PC-9 (cell line): ENCODE measurements at regions of chr1 and their contacts with region 1.

Region 1: GRCh38 chr1:37704966-37705365 is 12.7 kb downstream of the CDCA8 start:
- DNase-seq: no peak
- H3K4me3 ChIP-seq: no peak overlapping the region
- H3K27ac ChIP-seq: no peak overlapping the region
- H3K4me1 ChIP-seq: no peaks in the 10 kb centered on the region
- H3K27me3 ChIP-seq: no peaks in the 10 kb centered on the region
- CTCF ChIP-seq: no peak

Region 2: GRCh38 chr1:37498872-37499617 is 205.9 kb before region 1 on chr1:
- CTCF ChIA-PET with region 1: no interaction called
- POLR2A ChIA-PET with region 1: interaction called, 13 read pairs
- intact Hi-C with region 1: no loop called
- DNase-seq: peak; percentile 50 to 78
- H3K4me3 ChIP-seq: no peak overlapping the region
- H3K27ac ChIP-seq: no peak overlapping the region
- H3K4me1 ChIP-seq: peaks cover 31% of the 10 kb centered on the region
- H3K27me3 ChIP-seq: no peaks in the 10 kb centered on the region
- CTCF ChIP-seq: no peak

Region 3: DNA sequence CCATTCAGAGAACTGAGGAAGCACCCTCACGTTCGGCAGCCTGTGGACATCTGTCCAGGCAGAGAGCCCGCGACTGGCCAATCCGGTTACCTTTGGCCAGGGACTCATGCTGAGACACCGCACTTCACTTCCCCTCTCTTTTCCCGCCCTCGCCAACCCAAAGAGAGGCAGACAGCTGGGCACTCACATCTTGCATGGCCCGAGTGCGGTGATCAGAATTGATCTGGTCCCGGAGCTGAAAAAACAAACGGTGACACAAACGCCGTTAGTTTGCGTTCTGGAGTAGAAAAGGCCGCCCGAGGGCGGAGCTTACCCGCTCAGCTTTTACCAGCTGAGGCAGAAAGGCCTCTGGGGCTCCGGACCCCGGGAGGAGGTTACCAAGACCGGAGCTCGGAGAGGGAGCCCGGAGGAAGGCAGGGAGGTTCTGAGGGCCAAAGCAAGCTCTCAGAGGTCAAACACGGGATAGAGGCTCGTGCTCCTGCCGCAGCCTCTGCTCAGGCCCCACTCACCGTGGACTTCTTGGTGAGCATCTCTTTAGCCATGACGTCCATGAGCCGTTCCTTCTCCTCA is 284.5 kb after region 1 on chr1:
- CTCF ChIA-PET with region 1: no interaction called
- POLR2A ChIA-PET with region 1: no interaction called
- intact Hi-C with region 1: no loop called
- DNase-seq: peak in 1 of 2 experiments; percentile 56
- H3K4me3 ChIP-seq: peak overlapping the region; percentile 89
- H3K27ac ChIP-seq: no peak overlapping the region
- H3K4me1 ChIP-seq: peaks cover 10% of the 10 kb centered on the region
- H3K27me3 ChIP-seq: no peaks in the 10 kb centered on the region
- CTCF ChIP-seq: no peak

Region 4: DNA sequence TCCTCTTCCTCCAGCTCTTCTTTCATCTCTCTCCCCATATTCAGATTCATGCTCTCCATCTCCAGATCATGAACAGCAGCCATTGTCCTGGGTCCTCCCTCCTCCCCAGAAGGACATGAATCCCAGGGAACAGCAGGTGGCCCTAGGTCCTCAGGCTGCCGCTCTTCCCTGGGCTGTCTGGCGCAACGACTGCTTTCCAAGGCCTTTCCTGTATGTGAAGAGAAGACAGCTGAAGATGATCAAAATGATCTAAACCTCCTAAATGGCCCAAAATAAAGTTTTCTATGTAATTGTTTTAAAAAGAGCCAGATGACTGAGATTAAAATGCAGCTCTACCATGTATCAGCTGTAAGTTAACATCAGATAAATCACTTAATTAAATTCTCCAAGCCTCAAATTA is 1214.2 kb after region 1 on chr1:
- CTCF ChIA-PET with region 1: no interaction called
- POLR2A ChIA-PET with region 1: no interaction called
- intact Hi-C with region 1: no loop called
- DNase-seq: no peak
- H3K4me3 ChIP-seq: no peak overlapping the region
- H3K27ac ChIP-seq: no peak overlapping the region
- H3K4me1 ChIP-seq: no peaks in the 10 kb centered on the region
- H3K27me3 ChIP-seq: no peaks in the 10 kb centered on the region
- CTCF ChIP-seq: no peak